MCF 10A (cell line): ENCODE measurements at regions of chr3 and their contacts with region 1.

Region 1: GRCh38 chr3:152268555-152269425 is at the start of gene MBNL1:
- DNase-seq: peak; percentile 81
- H3K4me3 Mint-ChIP-seq: peak within 1 kb of the TSS; percentile 90
- H3K27ac Mint-ChIP-seq: peak within 1 kb of the TSS; percentile 80
- H3K4me1 Mint-ChIP-seq: peaks cover 42% of the 10 kb centered on the region
- H3K27me3 Mint-ChIP-seq: no peaks in the 10 kb centered on the region
- CTCF ChIP-seq: no peak
- total RNA-seq, gene MBNL1: 114 and 139 TPM in 2 replicates

Region 2: DNA sequence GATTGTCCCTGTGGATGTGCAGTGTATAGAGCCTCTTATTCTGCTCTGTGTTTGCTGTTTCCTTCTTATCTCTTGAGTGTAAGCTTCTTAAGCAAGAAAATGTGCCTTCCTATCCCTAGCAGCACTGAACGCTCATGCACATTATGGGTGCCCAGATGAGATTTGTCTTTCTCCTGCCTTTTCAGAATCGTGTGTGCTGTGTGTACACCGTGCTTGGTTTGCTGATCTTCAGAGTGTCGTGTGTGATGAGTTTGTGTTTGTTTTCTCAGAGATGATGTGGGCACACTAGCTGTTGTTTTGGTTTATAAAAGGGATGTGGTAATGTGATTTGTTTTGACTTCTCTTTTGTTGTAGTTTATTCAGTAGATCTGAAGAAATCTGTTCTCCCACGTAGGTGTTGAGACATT is 1085.5 kb before region 1 on chr3:
- CTCF ChIA-PET with region 1: no interaction called
- POLR2A ChIA-PET with region 1: no interaction called
- intact Hi-C with region 1: no loop called
- DNase-seq: no peak
- H3K4me3 Mint-ChIP-seq: no peak overlapping the region
- H3K27ac Mint-ChIP-seq: no peak overlapping the region
- H3K4me1 Mint-ChIP-seq: no peaks in the 10 kb centered on the region
- H3K27me3 Mint-ChIP-seq: no peaks in the 10 kb centered on the region
- CTCF ChIP-seq: no peak

Region 3: GRCh38 chr3:151925876-151926275 is 342.9 kb before region 1 on chr3:
- CTCF ChIA-PET with region 1: no interaction called
- POLR2A ChIA-PET with region 1: no interaction called
- intact Hi-C with region 1: no loop called
- DNase-seq: peak; percentile 72
- H3K4me3 Mint-ChIP-seq: no peak overlapping the region
- H3K27ac Mint-ChIP-seq: peak overlapping the region; percentile 81
- H3K4me1 Mint-ChIP-seq: peaks cover 40% of the 10 kb centered on the region
- H3K27me3 Mint-ChIP-seq: no peaks in the 10 kb centered on the region
- CTCF ChIP-seq: no peak

Region 4: GRCh38 chr3:152097770-152098169 is 171.0 kb before region 1 on chr3:
- CTCF ChIA-PET with region 1: no interaction called
- POLR2A ChIA-PET with region 1: interaction called, 15 read pairs
- intact Hi-C with region 1: no loop called
- DNase-seq: no peak
- H3K4me3 Mint-ChIP-seq: no peak overlapping the region
- H3K27ac Mint-ChIP-seq: no peak overlapping the region
- H3K4me1 Mint-ChIP-seq: no peaks in the 10 kb centered on the region
- H3K27me3 Mint-ChIP-seq: no peaks in the 10 kb centered on the region
- CTCF ChIP-seq: no peak

Region 5: DNA sequence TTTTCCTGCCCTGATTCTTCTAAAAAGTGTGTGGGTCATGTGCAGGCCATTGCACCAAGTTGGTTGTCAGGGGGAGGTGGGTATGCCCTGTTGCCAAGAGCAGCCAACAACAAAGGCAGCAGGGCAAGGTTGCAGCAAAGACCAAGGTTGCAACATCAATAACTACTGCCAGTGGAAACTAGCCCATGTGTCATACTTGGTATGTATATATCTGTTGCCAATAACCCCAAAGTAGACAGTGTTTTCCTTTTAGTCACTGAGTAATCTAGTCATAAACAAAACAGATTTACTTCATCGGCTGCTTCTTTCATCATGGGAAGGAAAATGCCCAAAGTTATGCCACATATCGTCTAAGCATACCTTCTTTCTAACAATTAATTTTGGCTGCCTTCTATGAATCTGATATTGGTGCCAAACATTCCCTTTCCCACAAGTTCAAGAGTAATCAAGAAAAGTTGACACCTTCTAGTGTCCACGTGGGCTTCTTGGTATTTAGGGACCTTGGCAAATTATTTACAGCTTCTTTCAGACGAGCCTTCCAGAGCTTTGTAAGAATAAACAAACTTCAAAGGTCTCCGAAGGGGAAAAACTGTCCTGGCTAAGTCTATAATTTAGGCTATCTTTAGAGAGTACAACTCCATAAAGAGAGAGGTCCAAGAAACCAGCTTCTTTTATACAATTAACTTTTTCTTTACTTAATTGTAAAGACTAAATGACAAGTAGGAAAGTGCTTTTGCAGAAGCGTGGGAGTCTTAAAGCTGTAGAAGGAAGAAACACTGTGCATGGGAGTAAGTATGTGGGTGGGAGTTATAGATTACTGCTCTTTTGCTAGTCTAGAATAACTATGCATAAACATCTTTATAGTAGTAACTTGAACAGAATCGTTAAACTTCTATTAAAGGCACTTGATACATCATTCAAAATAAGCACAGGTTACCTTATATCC is 10.1 kb before region 1 on chr3:
- CTCF ChIA-PET with region 1: interaction called, 3 read pairs
- POLR2A ChIA-PET with region 1: interaction called, 47 read pairs
- intact Hi-C with region 1: no loop called
- DNase-seq: peak; percentile 98
- H3K4me3 Mint-ChIP-seq: peak overlapping the region; percentile 41
- H3K27ac Mint-ChIP-seq: peak overlapping the region; percentile 76
- H3K4me1 Mint-ChIP-seq: peaks cover 7% of the 10 kb centered on the region
- H3K27me3 Mint-ChIP-seq: no peaks in the 10 kb centered on the region
- CTCF ChIP-seq: no peak

Region 6: GRCh38 chr3:152298393-152299242 is 29.8 kb after region 1 on chr3:
- CTCF ChIA-PET with region 1: no interaction called
- POLR2A ChIA-PET with region 1: interaction called, 156 read pairs
- intact Hi-C with region 1: loop called (anchors 2 kb)
- DNase-seq: peak; percentile 97
- H3K4me3 Mint-ChIP-seq: peak overlapping the region; percentile 82
- H3K27ac Mint-ChIP-seq: peak overlapping the region; percentile 86
- H3K4me1 Mint-ChIP-seq: peaks cover 33% of the 10 kb centered on the region
- H3K27me3 Mint-ChIP-seq: no peaks in the 10 kb centered on the region
- CTCF ChIP-seq: no peak

Region 7: GRCh38 chr3:152382312-152383135 is 113.7 kb after region 1 on chr3:
- CTCF ChIA-PET with region 1: interaction called, 3 read pairs
- POLR2A ChIA-PET with region 1: interaction called, 20 read pairs
- intact Hi-C with region 1: no loop called
- DNase-seq: peak; percentile 31
- H3K4me3 Mint-ChIP-seq: peak overlapping the region; percentile 73
- H3K27ac Mint-ChIP-seq: peak overlapping the region; percentile 76
- H3K4me1 Mint-ChIP-seq: peaks cover 34% of the 10 kb centered on the region
- H3K27me3 Mint-ChIP-seq: no peaks in the 10 kb centered on the region
- CTCF ChIP-seq: no peak

Region 8: GRCh38 chr3:152444029-152444641 is 175.3 kb after region 1 on chr3:
- CTCF ChIA-PET with region 1: interaction called, 3 read pairs
- POLR2A ChIA-PET with region 1: interaction called, 25 read pairs
- intact Hi-C with region 1: loop called (anchors 1 kb)
- DNase-seq: peak; percentile 68
- H3K4me3 Mint-ChIP-seq: no peak overlapping the region
- H3K27ac Mint-ChIP-seq: no peak overlapping the region
- H3K4me1 Mint-ChIP-seq: peaks cover 18% of the 10 kb centered on the region
- H3K27me3 Mint-ChIP-seq: no peaks in the 10 kb centered on the region
- CTCF ChIP-seq: peak; percentile 56